ENCODE measurements at regions of chr5 and their contacts with region 1.

Region 1: DNA sequence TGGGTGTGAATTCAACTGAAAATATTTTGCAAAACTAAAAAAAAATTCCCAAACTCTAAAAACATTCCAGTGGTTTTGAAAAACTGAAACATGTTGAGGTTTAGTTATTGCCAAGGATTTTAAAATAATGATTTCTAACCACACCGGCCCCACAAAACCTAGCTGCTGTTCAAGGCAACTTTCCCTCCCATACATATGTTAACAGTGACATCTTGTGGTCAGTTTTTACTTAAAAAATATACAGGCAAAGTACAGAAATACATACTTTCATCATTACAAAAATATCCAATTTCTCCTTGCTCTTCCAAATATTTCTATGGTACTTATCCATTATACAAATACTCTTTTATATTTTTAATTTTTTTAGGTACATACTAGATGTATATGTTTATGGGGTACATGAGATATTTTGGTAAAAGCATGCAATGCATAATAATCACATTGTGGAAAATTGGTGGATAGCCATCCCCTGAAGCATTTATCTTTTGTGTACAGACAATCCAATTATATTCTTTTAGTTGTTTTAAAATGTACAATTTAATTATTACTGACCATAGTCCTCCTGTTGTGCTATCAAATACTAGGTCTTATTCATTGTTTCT is 34.4 kb upstream of the MRPS30 start:
- DNase-seq: peak; percentile 0
- H3K4me3 ChIP-seq: no peak overlapping the region
- H3K27ac ChIP-seq: no peak overlapping the region
- H3K4me1 ChIP-seq: no peaks in the 10 kb centered on the region
- H3K27me3 ChIP-seq: no peaks in the 10 kb centered on the region
- CTCF ChIP-seq: peak in 2 of 3 experiments; percentile 22 to 36

Region 2: DNA sequence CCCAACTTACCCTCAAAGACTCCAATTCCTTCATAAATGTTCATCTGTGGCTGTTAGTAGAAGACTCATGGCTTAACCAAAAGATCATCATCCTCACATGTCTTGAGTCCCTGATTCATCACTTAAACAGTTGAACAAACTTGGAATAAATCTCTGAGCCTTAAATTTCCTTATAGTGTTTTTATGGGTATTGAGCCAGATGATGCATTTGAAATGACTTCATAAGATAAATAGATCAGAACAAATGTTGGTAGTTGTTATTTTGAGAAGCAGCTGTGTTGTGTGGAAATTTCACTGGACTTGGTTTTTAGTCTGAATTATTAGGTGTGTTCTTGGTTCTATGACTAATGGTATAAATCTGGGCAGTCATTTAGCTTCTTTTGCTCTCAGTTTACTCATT is 935.2 kb before region 1 on chr5:
- dilution Hi-C with region 1: no loop called
- DNase-seq: no peak
- H3K4me3 ChIP-seq: no peak overlapping the region
- H3K27ac ChIP-seq: no peak overlapping the region
- H3K4me1 ChIP-seq: no peaks in the 10 kb centered on the region
- H3K27me3 ChIP-seq: no peaks in the 10 kb centered on the region
- CTCF ChIP-seq: no peak

Region 3: GRCh38 chr5:44443172-44443571 is 331.2 kb before region 1 on chr5:
- dilution Hi-C with region 1: no loop called
- DNase-seq: no peak
- H3K4me3 ChIP-seq: no peak overlapping the region
- H3K27ac ChIP-seq: no peak overlapping the region
- H3K4me1 ChIP-seq: no peaks in the 10 kb centered on the region
- H3K27me3 ChIP-seq: no peaks in the 10 kb centered on the region
- CTCF ChIP-seq: no peak

Region 4: GRCh38 chr5:44536650-44537260 is 237.6 kb before region 1 on chr5:
- dilution Hi-C with region 1: loop called (anchors 25 kb)
- DNase-seq: no peak
- H3K4me3 ChIP-seq: no peak overlapping the region
- H3K27ac ChIP-seq: no peak overlapping the region
- H3K4me1 ChIP-seq: no peaks in the 10 kb centered on the region
- H3K27me3 ChIP-seq: no peaks in the 10 kb centered on the region
- CTCF ChIP-seq: peak; percentile 46 to 65 (median 62)